Thyroid gland (tissue), 4 donors: ENCODE measurements at regions of chrX and their contacts with region 1.

Region 1: DNA sequence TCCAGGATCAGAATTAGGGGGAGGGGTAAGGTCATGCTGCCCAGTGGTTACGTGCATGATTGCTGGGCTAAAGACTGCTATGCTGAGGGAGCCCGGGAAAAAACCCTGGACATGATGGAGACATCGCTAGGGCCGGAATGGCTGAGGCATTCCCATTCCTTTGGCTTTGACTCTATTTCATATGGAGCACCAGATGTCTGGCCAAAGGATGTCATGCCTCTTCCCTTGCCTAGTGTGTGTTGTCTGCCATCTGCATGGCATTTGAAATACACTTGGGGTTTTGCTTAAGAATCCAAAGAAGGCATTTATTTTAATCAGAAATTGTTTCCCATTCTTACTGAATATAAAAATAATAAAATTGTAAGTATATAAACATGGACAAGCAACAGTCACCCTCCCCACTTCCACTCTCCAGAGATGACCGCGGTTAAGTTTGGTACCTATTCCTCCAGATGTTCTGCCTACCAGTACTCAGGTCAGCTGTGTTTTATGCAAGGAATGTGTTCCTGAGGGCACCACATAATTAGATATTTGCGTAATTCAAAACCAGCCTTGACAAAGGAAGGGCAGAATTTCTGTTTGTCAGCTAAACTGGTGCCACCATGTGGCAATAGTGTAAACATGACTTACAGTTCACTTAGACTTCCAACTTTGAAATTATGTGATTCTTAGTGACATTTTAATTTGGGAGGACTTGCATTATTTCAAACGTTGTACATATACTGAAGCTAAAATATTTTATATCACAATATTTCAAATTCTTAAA is 105.9 kb downstream of the CT47B1 start:
- DNase-seq: no peak
- H3K4me3 ChIP-seq: no peak overlapping the region
- H3K27ac ChIP-seq: no peak overlapping the region
- H3K4me1 ChIP-seq: no peaks in the 10 kb centered on the region
- H3K27me3 ChIP-seq: no peaks in the 10 kb centered on the region
- CTCF ChIP-seq: peak in 2 of 6 experiments; percentile 23 to 32
- POLR2A ChIP-seq: no peak

Region 2: GRCh38 chrX:120244735-120245498 is 524.8 kb before region 1 on chrX:
- intact Hi-C with region 1: no loop called
- DNase-seq: peak; percentile 80 to 82
- H3K4me3 ChIP-seq: peak overlapping the region in 2 of 3 donors; percentile 45 to 68
- H3K27ac ChIP-seq: peak overlapping the region; percentile 82 to 90 (median 87)
- H3K4me1 ChIP-seq: peaks cover 0 to 7% of the 10 kb centered on the region in 2 donors
- H3K27me3 ChIP-seq: no peaks in the 10 kb centered on the region
- CTCF ChIP-seq: no peak
- POLR2A ChIP-seq: peak in 1 of 2 donors; percentile 30

Region 3: DNA sequence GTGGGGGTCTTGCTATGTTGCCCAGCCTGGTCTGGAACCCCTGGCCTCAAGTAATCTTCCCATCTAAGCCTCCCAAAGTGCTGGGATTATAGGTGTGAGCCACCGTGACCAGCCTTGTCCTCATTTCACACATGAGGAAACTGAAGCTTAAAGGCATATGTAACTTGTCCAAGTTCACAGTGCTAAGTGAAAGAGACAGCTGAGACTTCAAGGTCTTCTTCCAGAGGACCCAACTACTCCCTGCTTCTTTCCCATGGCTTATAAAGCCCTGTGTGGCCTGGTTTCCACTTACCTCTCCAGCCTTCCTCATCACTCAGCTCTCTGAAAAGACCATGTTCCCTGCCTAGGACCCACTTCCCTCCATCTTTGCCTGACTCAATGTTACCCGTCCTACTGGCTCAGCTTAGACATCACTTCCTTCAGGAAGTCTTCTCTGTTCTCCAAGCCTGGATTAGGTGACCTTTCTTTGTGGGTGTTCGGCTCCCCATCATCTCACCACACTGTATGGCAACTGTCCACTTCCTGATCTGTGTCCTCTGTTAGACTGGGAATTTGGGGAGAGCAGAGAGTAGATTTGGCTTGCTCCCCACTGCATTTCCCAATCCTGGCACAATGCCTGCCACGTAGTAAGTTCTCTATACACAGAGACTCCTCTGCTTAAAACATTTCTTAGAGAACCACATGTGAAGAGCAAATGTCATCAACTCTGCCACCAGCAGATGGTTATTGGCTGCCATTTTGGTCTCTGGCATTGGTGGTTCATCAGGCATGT is 270.3 kb before region 1 on chrX:
- intact Hi-C with region 1: loop called (anchors 10 kb)
- DNase-seq: no peak
- H3K4me3 ChIP-seq: no peak overlapping the region
- H3K27ac ChIP-seq: no peak overlapping the region
- H3K4me1 ChIP-seq: no peaks in the 10 kb centered on the region
- H3K27me3 ChIP-seq: no peaks in the 10 kb centered on the region
- CTCF ChIP-seq: no peak
- POLR2A ChIP-seq: no peak

Region 4: DNA sequence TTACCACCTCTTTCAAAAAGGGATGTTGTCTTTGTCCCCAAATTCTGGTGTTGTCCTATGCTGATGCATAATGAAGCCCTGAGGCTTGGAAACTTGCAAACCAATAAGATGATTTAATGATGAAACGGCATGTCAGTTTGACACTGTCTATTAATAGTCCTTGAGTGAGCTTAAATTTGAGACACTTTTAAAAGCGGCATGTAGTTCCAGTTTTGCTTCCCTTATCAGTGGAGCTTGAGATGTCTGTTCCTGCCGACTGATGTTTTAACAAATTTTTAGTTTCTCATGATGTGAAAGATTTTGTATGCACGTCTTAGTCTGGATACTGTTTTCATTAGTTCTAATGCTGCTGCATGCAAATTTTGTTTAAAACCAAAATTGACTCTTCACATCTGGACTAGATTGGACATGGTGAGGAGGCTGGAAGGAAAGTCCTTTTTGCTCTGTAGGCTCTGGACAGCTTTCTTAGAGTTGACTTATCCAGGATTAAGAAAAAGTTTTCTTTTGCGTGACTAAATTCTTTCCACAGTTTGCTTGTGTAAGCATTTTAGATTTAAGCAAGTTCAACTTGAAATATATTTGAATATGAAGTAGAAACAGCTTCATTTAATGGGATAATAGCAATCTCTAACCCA is 151.6 kb before region 1 on chrX:
- intact Hi-C with region 1: no loop called
- DNase-seq: no peak
- H3K4me3 ChIP-seq: no peak overlapping the region
- H3K27ac ChIP-seq: no peak overlapping the region
- H3K4me1 ChIP-seq: no peaks in the 10 kb centered on the region
- H3K27me3 ChIP-seq: no peaks in the 10 kb centered on the region
- CTCF ChIP-seq: no peak
- POLR2A ChIP-seq: no peak

Region 5: GRCh38 chrX:121208563-121208962 is 438.8 kb after region 1 on chrX:
- intact Hi-C with region 1: no loop called
- DNase-seq: no peak
- H3K4me3 ChIP-seq: no peak overlapping the region
- H3K27ac ChIP-seq: no peak overlapping the region
- H3K4me1 ChIP-seq: no peaks in the 10 kb centered on the region
- H3K27me3 ChIP-seq: no peaks in the 10 kb centered on the region
- CTCF ChIP-seq: no peak
- POLR2A ChIP-seq: no peak